ENCODE measurements at regions of chr1 and their contacts with region 1.

Region 1: DNA sequence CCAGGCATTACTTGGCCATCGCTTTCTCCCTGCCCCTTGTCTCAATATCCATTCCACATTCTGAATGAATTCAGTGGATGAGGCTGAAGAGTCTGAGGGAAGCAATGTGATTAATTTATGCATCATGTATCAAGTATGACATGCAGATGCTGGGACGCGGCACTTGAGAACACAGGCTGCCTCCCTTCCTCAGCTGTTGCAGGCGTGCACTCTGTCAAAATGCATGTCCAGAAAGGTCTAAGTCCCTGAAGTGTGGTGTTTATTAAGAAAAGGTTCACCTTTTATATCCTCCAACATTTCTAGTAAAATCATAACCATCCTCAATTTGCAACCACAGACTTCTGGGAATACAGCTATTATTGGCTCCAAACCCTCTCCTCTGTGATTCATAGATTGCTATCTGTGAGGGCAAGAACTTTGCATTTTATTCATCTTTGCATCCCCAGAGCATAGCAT is 22.6 kb upstream of the RAB3GAP2 start:
- DNase-seq: no peak
- H3K4me3 ChIP-seq: no peak overlapping the region
- H3K27ac ChIP-seq: no peak overlapping the region
- H3K4me1 ChIP-seq: peaks cover 0 to 11% (median 3%) of the 10 kb centered on the region in 4 experiments; a peak in 2 of 7 replicates
- H3K27me3 ChIP-seq: no peaks in the 10 kb centered on the region
- CTCF ChIP-seq: no peak
- EP300 ChIP-seq: no peak
- POLR2A ChIP-seq: no peak
- RAD21 ChIP-seq: no peak

Region 2: DNA sequence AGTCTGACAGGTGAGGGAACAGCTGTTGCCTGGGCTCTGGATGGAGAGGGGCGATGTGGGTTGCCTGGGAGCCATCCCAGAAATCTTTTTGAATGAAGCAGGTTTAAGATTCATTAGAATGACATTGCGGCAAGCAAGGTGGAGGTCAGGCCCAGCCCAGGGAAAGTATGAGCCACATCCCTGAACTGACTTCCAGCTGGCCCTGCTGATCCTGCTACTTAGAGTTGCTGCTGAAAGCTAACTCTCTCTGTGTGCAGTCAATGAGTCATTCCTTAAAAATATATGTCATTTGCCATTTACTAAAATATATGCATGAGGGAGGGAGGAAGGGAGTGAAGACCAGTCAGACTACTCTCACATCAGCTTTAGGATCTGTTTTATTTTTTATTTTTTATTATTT is 31.7 kb after region 1 on chr1:
- CTCF ChIA-PET with region 1: interaction called, 12 read pairs
- POLR2A ChIA-PET with region 1: no interaction called
- DNase-seq: no peak
- H3K4me3 ChIP-seq: no peak overlapping the region
- H3K27ac ChIP-seq: no peak overlapping the region
- H3K4me1 ChIP-seq: peaks cover 0 to 6% (median 2%) of the 10 kb centered on the region in 4 experiments; a peak in 3 of 7 replicates
- H3K27me3 ChIP-seq: no peaks in the 10 kb centered on the region
- CTCF ChIP-seq: no peak
- EP300 ChIP-seq: no peak
- POLR2A ChIP-seq: no peak
- RAD21 ChIP-seq: no peak

Region 3: DNA sequence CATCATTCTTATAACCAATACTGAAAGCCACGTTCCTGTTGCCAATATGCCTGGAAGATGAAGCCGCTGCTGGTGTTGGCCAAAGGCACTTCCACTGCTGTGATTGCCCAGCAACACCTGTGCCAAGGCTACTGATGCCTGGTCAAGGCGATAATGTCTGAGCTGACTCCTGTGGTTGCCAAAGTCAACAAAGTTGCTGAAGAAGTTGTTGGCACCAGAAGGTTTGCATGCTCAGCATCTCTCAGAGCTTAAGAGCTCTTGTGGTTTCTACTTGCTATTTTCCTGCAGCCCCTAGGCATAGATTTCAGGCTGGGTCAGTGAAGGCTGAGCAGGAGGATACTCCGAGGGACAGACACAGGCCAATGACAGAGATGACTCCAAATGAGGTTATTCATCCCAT is 40.8 kb after region 1 on chr1:
- CTCF ChIA-PET with region 1: interaction called, 19 read pairs
- POLR2A ChIA-PET with region 1: interaction called, 3 read pairs
- DNase-seq: no peak
- H3K4me3 ChIP-seq: no peak overlapping the region
- H3K27ac ChIP-seq: 0 out of 2 replicates have a peak overlapping the region, but pooled peaks have one; percentile 8
- H3K4me1 ChIP-seq: peaks cover 2 to 20% (median 12%) of the 10 kb centered on the region in 4 experiments; a peak in 6 of 7 replicates
- H3K27me3 ChIP-seq: no peaks in the 10 kb centered on the region
- CTCF ChIP-seq: no peak
- EP300 ChIP-seq: no peak
- POLR2A ChIP-seq: no peak
- RAD21 ChIP-seq: no peak

Region 4: DNA sequence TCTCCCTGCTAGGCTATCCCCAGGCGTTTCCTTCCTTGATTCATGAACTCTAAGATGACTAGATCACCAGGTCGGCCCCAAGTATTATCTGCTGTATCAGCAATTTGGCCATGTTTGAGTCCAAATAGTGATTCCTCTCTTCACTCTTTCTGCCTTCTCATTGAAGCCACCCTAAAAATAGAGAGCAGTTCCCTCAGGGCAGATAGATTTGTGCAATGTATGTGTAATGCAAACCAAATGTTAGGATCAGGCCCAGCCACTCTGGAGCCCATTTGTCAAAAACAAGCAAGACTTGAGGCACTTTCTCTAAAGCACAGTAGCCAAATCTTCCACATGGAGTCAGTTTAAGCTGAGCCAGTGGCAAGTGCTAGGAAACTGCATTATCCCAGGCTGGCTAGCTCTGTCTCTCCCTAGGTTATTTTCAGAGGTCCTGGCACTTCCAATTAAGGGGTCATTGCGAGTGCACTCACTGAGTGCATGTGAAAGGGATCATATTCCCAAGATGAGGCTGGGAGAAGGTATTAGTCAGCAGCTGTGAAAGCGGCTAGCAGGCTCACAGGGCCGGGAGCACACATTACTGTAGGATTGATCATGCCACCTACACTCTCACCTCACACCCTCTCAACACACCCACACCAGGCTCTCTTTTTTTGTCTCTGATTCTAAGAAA is 75.3 kb after region 1 on chr1:
- CTCF ChIA-PET with region 1: interaction called, 45 read pairs
- POLR2A ChIA-PET with region 1: no interaction called
- DNase-seq: no peak
- H3K4me3 ChIP-seq: no peak overlapping the region
- H3K27ac ChIP-seq: no peak overlapping the region
- H3K4me1 ChIP-seq: peaks cover 6 to 14% (median 11%) of the 10 kb centered on the region in 4 experiments; a peak in 6 of 7 replicates
- H3K27me3 ChIP-seq: no peaks in the 10 kb centered on the region
- CTCF ChIP-seq: no peak
- EP300 ChIP-seq: no peak
- POLR2A ChIP-seq: no peak
- RAD21 ChIP-seq: no peak

Region 5: DNA sequence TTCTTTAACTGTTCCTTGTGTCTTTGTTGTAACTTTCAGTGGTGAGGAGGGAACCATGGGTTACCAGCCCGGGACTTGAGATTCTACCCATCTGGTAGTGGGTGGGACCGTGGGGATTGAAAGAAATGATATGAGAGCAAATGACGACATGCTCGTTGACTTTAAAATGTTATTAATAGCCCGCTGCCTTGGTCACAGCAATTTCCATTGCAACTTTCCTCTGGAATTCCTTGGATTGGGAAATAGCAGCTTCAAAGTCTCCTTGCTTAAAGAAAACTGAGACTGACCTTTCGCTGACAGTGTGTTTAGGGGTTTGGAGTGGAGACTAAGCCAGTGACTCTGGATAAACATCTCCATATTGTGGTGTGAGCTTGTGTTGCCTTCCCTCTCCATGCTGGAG is 188.8 kb after region 1 on chr1:
- CTCF ChIA-PET with region 1: interaction called, 29 read pairs
- POLR2A ChIA-PET with region 1: no interaction called
- DNase-seq: no peak
- H3K4me3 ChIP-seq: no peak overlapping the region
- H3K27ac ChIP-seq: no peak overlapping the region
- H3K4me1 ChIP-seq: no peaks in the 10 kb centered on the region
- H3K27me3 ChIP-seq: no peaks in the 10 kb centered on the region
- CTCF ChIP-seq: no peak
- EP300 ChIP-seq: no peak
- POLR2A ChIP-seq: no peak
- RAD21 ChIP-seq: no peak

Region 6: GRCh38 chr1:220527279-220527907 is 232.5 kb after region 1 on chr1:
- CTCF ChIA-PET with region 1: interaction called, 21 read pairs
- POLR2A ChIA-PET with region 1: no interaction called
- DNase-seq: peak in 1 of 2 experiments; percentile 58
- H3K4me3 ChIP-seq: peak overlapping the region; percentile 80 to 99 (median 90)
- H3K27ac ChIP-seq: no peak overlapping the region
- H3K4me1 ChIP-seq: peaks cover 2 to 8% (median 3%) of the 10 kb centered on the region in 4 experiments; a peak in 5 of 7 replicates
- H3K27me3 ChIP-seq: no peaks in the 10 kb centered on the region
- CTCF ChIP-seq: no peak
- EP300 ChIP-seq: no peak
- POLR2A ChIP-seq: no peak
- RAD21 ChIP-seq: no peak

Measured in H1 (cell line).